ENCODE measurements at regions of chr11 and their contacts with region 1.

Region 1: GRCh38 chr11:10770626-10771254 is 19.7 kb downstream of the CTR9 start:
- DNase-seq: no peak
- H3K4me3 ChIP-seq: no peak overlapping the region
- H3K27ac ChIP-seq: no peak overlapping the region
- H3K27me3 ChIP-seq: no peaks in the 10 kb centered on the region
- CTCF ChIP-seq: peak; percentile 87

Region 2: GRCh38 chr11:10750838-10751580 is 19.7 kb before region 1 on chr11 and contains the start of gene CTR9:
- CTCF ChIA-PET with region 1: interaction called, 11 read pairs
- POLR2A ChIA-PET with region 1: interaction called, 6 read pairs
- DNase-seq: peak; percentile 68
- H3K4me3 ChIP-seq: peak within 1 kb of the TSS; percentile 93
- H3K27ac ChIP-seq: peak within 1 kb of the TSS; percentile 97
- H3K27me3 ChIP-seq: no peaks in the 10 kb centered on the region
- CTCF ChIP-seq: peak; percentile 29
- polyA plus RNA-seq, gene CTR9: 21.8 and 22.6 TPM in 2 replicates

Region 3: DNA sequence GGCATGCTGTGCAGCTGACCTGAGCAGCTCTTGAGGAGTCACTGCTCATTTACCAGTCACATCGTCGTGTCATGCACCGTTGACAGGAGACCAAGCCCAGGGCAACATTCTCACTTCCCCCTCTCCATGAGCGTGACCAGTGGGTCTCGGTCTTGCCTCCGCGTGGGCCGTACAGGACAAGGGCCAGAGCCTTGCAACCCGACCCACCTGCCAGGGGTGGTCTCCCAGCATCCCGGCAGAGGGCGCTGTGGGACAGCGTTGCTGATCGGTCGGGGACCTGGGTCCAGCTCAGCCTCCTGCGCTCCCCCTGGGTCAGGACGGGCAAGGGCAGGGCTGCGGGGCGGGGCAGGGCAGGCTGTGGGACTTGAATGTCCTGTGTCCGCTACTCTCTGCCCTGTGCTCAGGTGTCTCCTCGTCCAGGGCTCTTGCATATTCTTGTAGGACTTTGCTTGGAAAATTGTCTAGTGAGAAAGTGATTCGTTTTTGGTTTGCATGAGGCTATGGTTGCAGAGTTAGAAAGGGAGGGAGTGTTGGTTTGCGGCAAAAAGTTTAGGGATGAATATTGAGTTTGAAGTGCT is 21.7 kb after region 1 on chr11:
- CTCF ChIA-PET with region 1: interaction called, 17 read pairs
- POLR2A ChIA-PET with region 1: no interaction called
- DNase-seq: peak; percentile 32
- H3K4me3 ChIP-seq: peak overlapping the region; percentile 30; the same call in 1 of the 2 replicates
- H3K27ac ChIP-seq: no peak overlapping the region
- H3K27me3 ChIP-seq: no peaks in the 10 kb centered on the region
- CTCF ChIP-seq: peak; percentile 85

Measured in AG04450 (cell line).